Caco-2 (cell line): ENCODE measurements at regions of chr16 and their contacts with region 1.

Region 1: DNA sequence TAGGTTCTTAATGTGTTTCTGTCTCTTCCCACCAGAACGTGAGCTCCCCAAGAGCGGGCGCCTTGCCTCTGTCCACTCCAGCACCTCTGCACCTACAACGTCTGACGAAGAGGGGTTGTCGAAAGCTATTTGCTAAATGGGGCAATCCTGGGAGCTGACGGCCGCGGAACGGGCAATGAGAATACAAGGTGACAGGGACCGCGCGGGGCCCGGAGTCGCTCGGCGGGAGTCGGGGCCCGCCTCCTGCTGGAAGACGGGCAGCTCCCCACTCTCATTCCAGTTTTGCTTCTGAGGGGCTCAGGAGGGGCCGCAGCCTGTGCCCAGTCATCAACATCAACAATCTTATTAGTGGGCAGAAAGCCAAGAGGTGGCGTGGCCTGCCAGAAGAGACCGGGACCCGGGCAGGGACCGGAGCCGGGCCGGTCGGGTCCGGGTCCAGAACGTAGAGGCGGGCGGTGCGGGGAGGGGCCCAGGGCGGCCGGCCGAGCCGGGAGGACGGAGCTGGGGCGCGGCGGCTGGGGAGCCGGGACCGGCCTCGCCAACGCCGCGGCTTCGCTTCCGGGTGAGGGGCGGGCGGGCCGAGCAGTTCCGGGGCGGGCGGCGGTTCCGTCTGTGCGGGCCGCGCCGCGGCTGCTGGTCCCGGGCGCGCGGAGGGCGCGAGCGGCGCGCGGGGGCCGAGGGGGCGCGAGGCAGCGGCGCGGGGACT is at the start of gene MOSMO:
- DNase-seq: peak; percentile 60 to 70
- H3K4me3 ChIP-seq: peak within 1 kb of the TSS; percentile 95
- H3K4me3 Mint-ChIP-seq: peak within 1 kb of the TSS; percentile 87
- H3K27ac Mint-ChIP-seq: peak within 1 kb of the TSS; percentile 72
- H3K4me1 ChIP-seq: no peaks in the 10 kb centered on the region
- H3K4me1 Mint-ChIP-seq: peaks cover 12% of the 10 kb centered on the region
- H3K27me3 ChIP-seq: no peaks in the 10 kb centered on the region
- H3K27me3 Mint-ChIP-seq: no peaks in the 10 kb centered on the region
- CTCF ChIP-seq: peak in 1 of 2 experiments; percentile 20
- total RNA-seq, gene MOSMO: 10.2 and 10.9 TPM in 2 replicates

Region 2: DNA sequence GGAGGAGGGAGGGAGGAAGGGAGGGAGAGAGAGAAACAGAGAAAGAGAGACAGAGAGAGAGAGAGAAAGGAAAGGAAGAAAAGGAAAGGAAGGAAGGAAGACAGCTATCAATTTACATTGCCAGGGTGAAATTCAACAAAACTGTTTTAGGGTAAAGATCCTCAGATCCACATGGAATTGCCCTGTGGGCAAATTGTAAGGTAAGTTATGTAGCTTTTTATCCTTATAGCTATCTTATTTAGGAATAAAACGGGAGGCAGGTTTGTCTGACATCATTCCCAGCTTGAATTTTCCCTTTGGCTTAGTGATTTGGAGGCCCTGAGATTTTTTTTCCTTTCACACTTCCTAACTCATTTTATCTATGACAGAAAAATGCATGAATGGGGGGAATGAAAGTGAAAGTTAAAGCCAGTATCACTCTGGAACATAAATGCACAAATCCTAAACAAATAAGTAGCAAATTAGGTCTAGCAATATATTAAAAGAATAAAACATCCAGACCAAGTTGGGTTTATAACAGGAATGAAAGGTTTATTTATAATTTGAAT is 57.9 kb before region 1 on chr16:
- CTCF ChIA-PET with region 1: no interaction called
- POLR2A ChIA-PET with region 1: interaction called, 15 read pairs
- intact Hi-C with region 1: no loop called
- DNase-seq: no peak
- H3K4me3 ChIP-seq: no peak overlapping the region
- H3K4me3 Mint-ChIP-seq: no peak overlapping the region
- H3K27ac Mint-ChIP-seq: no peak overlapping the region
- H3K4me1 ChIP-seq: 0 out of 2 replicates have a peak, but pooled peaks cover 3% of the 10 kb centered on the region
- H3K4me1 Mint-ChIP-seq: peaks cover 6% of the 10 kb centered on the region
- H3K27me3 ChIP-seq: no peaks in the 10 kb centered on the region
- H3K27me3 Mint-ChIP-seq: no peaks in the 10 kb centered on the region
- CTCF ChIP-seq: no peak

Region 3: DNA sequence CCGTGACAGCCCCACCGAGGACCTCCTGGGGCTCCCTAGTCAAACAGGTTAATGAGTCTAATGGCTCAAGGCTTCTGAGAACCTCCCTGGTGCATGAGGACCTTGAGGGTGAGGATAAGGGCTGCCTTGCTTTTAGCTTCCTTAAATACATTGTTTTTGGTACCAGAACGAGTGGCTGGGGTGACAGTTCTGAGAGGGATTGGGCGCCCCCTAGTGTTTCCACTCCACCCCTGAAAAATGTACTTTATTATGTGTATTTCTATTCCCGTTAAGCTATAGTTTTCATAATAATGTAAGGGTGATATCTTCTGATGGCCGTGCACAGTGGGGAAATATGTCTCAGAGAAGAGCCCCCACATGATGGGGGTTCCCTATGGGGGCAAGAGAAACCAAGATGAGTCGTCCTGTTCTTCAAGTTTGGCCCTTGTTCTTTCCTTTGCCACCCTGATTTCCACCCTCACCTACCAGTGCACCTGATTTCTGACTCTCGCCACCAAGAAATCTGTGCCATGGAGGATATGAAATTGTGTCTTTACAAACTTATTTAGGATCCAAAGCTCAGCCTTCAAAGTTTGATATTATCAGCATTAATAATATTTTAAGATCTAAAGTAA is 70.1 kb after region 1 on chr16:
- CTCF ChIA-PET with region 1: interaction called, 53 read pairs
- POLR2A ChIA-PET with region 1: no interaction called
- intact Hi-C with region 1: no loop called
- DNase-seq: peak; percentile 49 to 70
- H3K4me3 ChIP-seq: no peak overlapping the region
- H3K4me3 Mint-ChIP-seq: no peak overlapping the region
- H3K27ac Mint-ChIP-seq: no peak overlapping the region
- H3K4me1 ChIP-seq: no peaks in the 10 kb centered on the region
- H3K4me1 Mint-ChIP-seq: no peaks in the 10 kb centered on the region
- H3K27me3 ChIP-seq: no peaks in the 10 kb centered on the region
- H3K27me3 Mint-ChIP-seq: no peaks in the 10 kb centered on the region
- CTCF ChIP-seq: peak; percentile 81 to 83

Region 4: GRCh38 chr16:23587726-23588125 is 1580.1 kb after region 1 on chr16:
- CTCF ChIA-PET with region 1: no interaction called
- POLR2A ChIA-PET with region 1: interaction called, 14 read pairs
- intact Hi-C with region 1: no loop called
- DNase-seq: no peak
- H3K4me3 ChIP-seq: no peak overlapping the region
- H3K4me3 Mint-ChIP-seq: no peak overlapping the region
- H3K27ac Mint-ChIP-seq: no peak overlapping the region
- H3K4me1 ChIP-seq: no peaks in the 10 kb centered on the region
- H3K4me1 Mint-ChIP-seq: no peaks in the 10 kb centered on the region
- H3K27me3 ChIP-seq: no peaks in the 10 kb centered on the region
- H3K27me3 Mint-ChIP-seq: no peaks in the 10 kb centered on the region
- CTCF ChIP-seq: no peak